ENCODE measurements at regions of chr17 and their contacts with region 1.

Region 1: DNA sequence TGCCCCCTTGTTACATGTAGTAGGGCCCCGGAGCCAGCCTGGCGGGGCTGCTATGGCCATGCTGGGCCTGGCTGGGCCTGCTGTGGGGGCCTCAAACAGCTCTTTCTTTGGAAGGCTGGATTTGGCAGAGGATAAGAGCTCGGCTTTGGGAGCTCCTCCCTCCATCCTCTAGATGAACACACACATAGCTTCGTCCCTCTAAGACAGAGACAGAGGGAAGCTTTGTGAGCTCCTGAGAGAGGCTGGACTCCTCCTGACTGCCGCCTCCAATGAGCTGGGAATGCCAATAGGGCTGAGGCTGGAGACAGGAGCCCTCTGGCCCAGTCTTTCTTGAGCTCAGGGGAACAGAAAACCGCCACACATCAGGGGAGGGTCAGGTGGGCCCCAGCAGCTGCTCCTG is 37.3 kb upstream of the CDC42EP4 start:
- DNase-seq: no peak

Region 2: GRCh38 chr17:73228748-73229236 is 120.3 kb before region 1 on chr17:
- intact Hi-C with region 1: no loop called
- DNase-seq: peak; percentile 92

Region 3: DNA sequence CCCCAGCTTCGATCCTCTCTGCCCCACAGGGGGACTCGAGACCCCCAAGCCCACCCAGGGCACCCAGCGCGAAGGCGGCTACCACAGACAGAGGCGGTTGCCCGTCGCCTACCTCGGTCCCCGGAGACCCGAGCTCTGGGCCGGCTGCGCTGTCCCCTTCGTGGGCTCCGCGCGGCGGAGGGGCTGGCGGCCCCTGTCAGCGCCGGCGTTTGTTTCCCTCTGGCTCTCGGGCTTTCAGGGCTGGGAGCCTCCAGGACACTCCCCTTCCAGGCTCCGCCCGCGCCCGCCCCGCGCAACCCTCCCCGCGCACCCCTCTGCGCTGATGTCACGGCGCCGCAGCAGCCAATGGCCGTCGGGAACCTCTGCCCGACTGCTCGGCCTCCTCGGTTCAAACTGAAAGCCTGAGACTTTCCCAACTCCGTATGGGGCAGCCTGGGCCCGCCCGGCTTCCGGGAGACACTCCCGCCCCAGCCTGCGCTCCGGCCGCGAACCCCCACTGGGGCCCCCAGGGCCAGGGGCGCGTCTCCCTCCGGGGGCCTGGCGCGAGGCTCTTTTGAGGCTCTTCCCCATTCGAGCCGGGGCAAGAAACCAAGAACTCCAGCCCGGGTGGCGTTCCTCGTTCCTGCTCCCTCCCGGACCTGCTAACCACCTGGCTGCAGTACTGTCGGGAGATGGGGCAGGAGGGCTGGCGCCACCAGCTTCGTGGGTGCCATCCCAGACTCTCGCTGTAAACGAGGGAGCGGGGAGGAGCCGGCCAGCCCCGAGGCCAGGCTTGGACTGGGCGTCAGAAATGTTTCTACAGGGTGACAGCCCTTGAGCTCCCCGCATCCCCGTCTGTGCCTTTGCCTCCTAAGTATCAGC is 37.1 kb before region 1 on chr17 and contains the start of gene CDC42EP4:
- intact Hi-C with region 1: loop called (anchors 1 to 5 kb)
- DNase-seq: peak; percentile 99
- total RNA-seq, gene CDC42EP4: 32.6 to 45.1 TPM

Region 4: DNA sequence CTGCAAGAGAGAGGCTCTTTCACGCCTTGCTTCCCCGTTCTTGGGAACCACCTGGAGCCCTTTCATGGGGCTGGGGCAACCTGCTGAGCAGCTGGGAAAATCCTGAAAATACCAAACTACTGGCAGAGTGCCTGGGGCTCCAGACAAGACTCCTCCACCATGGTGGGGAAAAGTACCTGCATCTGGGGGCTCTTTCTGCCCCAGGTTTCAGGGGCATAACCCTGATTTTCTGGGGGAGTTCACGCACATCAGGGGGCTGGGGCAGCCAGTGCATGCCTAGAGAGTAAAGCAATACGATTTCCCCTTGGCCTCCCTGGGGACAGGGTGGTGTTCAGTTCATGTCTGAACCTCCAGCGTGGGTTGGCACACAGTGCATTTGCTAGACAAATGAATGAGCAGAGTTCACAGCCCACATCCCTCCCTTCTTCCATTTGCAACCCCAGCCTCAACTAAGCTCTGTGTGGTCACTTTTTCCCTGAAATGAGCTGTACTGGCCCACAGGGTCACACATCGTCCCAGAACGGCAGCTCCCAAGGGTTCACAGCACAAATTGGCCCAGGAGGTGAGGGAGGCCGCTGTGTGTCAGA is 32.1 kb before region 1 on chr17:
- intact Hi-C with region 1: loop called (anchors 1 to 5 kb)
- DNase-seq: no peak